ENCODE measurements at regions of chr2 and their contacts with region 1.

Region 1: DNA sequence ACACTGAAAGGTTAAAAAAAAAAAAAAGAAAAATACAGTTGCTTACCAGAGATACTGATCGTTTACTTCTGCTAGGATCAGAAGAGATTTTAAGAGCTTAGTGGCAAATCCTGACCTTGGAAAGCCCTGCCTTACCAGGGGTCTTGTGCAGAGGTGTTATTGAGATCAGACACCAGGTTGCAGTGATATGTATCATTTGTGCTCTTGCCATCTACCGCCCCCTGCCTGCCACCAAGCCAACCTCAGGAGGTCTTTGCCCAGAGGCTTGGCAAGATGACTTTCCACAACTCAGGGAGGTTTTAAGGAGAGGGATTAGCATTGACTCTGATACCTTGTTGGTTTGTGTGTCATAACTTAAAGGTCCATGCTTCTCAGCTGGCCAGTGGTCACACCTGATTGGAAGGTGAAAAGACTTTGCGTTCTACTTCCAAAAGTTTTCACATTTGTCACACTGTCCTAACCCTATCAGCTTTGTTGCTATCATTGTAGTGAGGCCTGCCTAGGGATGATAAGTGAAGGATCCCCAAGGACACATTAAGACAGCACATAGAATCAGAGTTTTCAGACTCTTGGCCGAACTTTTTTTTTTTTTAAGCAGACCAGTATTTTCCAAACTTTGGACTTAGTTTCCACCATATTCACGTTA is 46.2 kb upstream of the MGAT5 start:
- DNase-seq: peak; percentile 38 to 81 (median 71)
- ATAC-seq: peak; percentile 94
- H3K4me3 ChIP-seq: no peak overlapping the region
- H3K4me3 Mint-ChIP-seq: no peak overlapping the region
- H3K27ac ChIP-seq: no peak overlapping the region
- H3K27ac Mint-ChIP-seq: no peak overlapping the region
- H3K4me1 ChIP-seq: peaks cover 34% of the 10 kb centered on the region
- H3K4me1 Mint-ChIP-seq: peaks cover 3% of the 10 kb centered on the region
- H3K27me3 ChIP-seq: no peaks in the 10 kb centered on the region
- H3K27me3 Mint-ChIP-seq: no peaks in the 10 kb centered on the region
- CTCF ChIP-seq: peak; percentile 63

Region 2: GRCh38 chr2:133886735-133887660 is 320.7 kb before region 1 on chr2:
- CTCF ChIA-PET with region 1: interaction called, 10 read pairs
- POLR2A ChIA-PET with region 1: no interaction called
- intact Hi-C with region 1: loop called (anchors 5 kb)
- DNase-seq: peak; percentile 4 to 61 (median 48)
- ATAC-seq: no peak
- H3K4me3 ChIP-seq: no peak overlapping the region
- H3K4me3 Mint-ChIP-seq: no peak overlapping the region
- H3K27ac ChIP-seq: no peak overlapping the region
- H3K27ac Mint-ChIP-seq: no peak overlapping the region
- H3K4me1 ChIP-seq: no peaks in the 10 kb centered on the region
- H3K4me1 Mint-ChIP-seq: peaks cover 2% of the 10 kb centered on the region
- H3K27me3 ChIP-seq: no peaks in the 10 kb centered on the region
- H3K27me3 Mint-ChIP-seq: peaks cover 4% of the 10 kb centered on the region
- CTCF ChIP-seq: peak; percentile 46

Region 3: GRCh38 chr2:134127496-134127895 is 80.2 kb before region 1 on chr2:
- CTCF ChIA-PET with region 1: interaction called, 211 read pairs
- POLR2A ChIA-PET with region 1: interaction called, 8 read pairs
- intact Hi-C with region 1: no loop called
- DNase-seq: peak in 8 of 9 experiments; percentile 22 to 66 (median 54)
- ATAC-seq: peak; percentile 77
- H3K4me3 ChIP-seq: no peak overlapping the region
- H3K4me3 Mint-ChIP-seq: peak overlapping the region; percentile 56
- H3K27ac ChIP-seq: no peak overlapping the region
- H3K27ac Mint-ChIP-seq: peak overlapping the region; percentile 46
- H3K4me1 ChIP-seq: peaks cover 60% of the 10 kb centered on the region
- H3K4me1 Mint-ChIP-seq: peaks cover 83% of the 10 kb centered on the region
- H3K27me3 ChIP-seq: no peaks in the 10 kb centered on the region
- H3K27me3 Mint-ChIP-seq: no peaks in the 10 kb centered on the region
- CTCF ChIP-seq: no peak

Region 4: GRCh38 chr2:134181210-134181609 is 26.5 kb before region 1 on chr2:
- CTCF ChIA-PET with region 1: interaction called, 20 read pairs
- POLR2A ChIA-PET with region 1: interaction called, 3 read pairs
- intact Hi-C with region 1: no loop called
- DNase-seq: peak; percentile 19 to 83 (median 58)
- ATAC-seq: peak; percentile 82
- H3K4me3 ChIP-seq: no peak overlapping the region
- H3K4me3 Mint-ChIP-seq: peak overlapping the region; percentile 49
- H3K27ac ChIP-seq: peak overlapping the region; percentile 17 to 55
- H3K27ac Mint-ChIP-seq: peak overlapping the region; percentile 88
- H3K4me1 ChIP-seq: peaks cover 70% of the 10 kb centered on the region
- H3K4me1 Mint-ChIP-seq: peaks cover 91% of the 10 kb centered on the region
- H3K27me3 ChIP-seq: no peaks in the 10 kb centered on the region
- H3K27me3 Mint-ChIP-seq: no peaks in the 10 kb centered on the region
- CTCF ChIP-seq: no peak

Region 5: DNA sequence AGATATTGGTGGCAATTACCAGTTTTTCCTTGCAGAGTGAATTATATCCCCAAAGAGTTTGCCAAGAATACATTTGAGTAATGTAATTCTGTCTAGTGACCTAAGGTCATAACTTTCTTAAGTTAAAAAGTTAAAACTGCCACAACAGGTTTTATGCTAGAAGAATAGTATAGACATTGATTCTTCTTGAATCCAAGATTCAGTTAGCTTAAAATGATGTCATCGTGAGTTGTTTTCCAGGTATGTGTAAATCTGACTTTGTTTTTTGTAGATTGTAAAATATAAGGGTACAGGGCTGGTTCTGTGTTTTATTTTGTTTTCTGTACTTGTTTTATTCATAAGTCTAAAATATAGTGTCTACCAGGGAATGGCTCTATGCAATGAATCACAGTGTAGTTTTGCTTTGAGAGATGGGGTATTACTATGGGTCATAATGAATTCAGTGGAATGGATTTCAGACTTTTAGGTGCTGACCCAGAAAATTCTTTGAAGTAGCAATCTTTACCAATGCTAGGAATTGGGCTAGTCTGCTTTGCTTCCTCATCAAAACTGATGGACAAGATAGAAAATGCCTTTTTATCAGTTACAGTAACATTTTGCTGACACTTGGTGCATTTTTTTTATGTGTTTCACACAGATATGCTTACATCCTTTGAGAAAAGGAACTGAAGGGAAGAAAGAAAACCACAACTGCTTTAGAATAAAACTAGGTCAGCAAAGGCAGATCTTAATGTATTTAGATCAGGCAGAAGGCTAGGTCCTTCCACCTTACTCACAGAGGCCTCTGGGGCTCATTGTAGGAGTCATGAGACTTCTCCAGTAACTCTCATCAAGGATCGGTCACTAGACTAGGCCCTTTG is 25.4 kb after region 1 on chr2:
- CTCF ChIA-PET with region 1: interaction called, 22 read pairs
- POLR2A ChIA-PET with region 1: interaction called, 4 read pairs
- intact Hi-C with region 1: no loop called
- DNase-seq: peak in 2 of 9 experiments; percentile 47 to 68
- ATAC-seq: peak; percentile 71
- H3K4me3 ChIP-seq: peak overlapping the region in 1 of 2 experiments; percentile 3
- H3K4me3 Mint-ChIP-seq: peak overlapping the region; percentile 67
- H3K27ac ChIP-seq: peak overlapping the region; percentile 19 to 73
- H3K27ac Mint-ChIP-seq: peak overlapping the region; percentile 92
- H3K4me1 ChIP-seq: peaks cover 58% of the 10 kb centered on the region
- H3K4me1 Mint-ChIP-seq: peaks cover 80% of the 10 kb centered on the region
- H3K27me3 ChIP-seq: no peaks in the 10 kb centered on the region
- H3K27me3 Mint-ChIP-seq: no peaks in the 10 kb centered on the region
- CTCF ChIP-seq: peak; percentile 24

Region 6: DNA sequence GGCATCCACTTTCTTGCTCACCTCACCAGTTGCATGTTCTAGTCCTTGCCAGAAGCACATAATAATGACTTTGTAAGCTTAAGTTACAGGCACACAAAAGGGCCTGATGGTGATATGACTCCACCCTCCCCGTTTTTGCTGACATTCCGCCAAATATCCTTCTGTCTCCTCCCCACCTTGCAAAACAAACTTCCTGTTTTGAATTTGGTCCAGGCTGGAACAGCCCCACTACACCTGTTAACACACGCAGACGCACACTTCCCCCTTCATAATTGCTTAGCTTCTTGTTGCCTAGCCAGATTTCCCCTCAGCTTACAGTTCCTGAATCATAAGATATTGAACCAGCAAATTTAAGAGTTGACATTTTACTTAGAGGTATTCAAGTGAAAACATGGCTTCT is 46.1 kb after region 1 on chr2 and contains the start of gene MGAT5:
- CTCF ChIA-PET with region 1: interaction called, 12 read pairs
- POLR2A ChIA-PET with region 1: no interaction called
- intact Hi-C with region 1: loop called (anchors 5 kb)
- DNase-seq: peak in 1 of 9 experiments; percentile 27
- ATAC-seq: no peak
- H3K4me3 ChIP-seq: no peak within 1 kb of the TSS
- H3K4me3 Mint-ChIP-seq: no peak within 1 kb of the TSS
- H3K27ac ChIP-seq: no peak within 1 kb of the TSS
- H3K27ac Mint-ChIP-seq: peak within 1 kb of the TSS; percentile 35
- H3K4me1 ChIP-seq: peaks cover 75% of the 10 kb centered on the region
- H3K4me1 Mint-ChIP-seq: peaks cover 92% of the 10 kb centered on the region
- H3K27me3 ChIP-seq: no peaks in the 10 kb centered on the region
- H3K27me3 Mint-ChIP-seq: no peaks in the 10 kb centered on the region
- CTCF ChIP-seq: no peak
- total RNA-seq, gene MGAT5: 49.6 to 52.9 TPM